K562 (cell line): ENCODE measurements at regions of chr13 and their contacts with region 1.

Region 1: DNA sequence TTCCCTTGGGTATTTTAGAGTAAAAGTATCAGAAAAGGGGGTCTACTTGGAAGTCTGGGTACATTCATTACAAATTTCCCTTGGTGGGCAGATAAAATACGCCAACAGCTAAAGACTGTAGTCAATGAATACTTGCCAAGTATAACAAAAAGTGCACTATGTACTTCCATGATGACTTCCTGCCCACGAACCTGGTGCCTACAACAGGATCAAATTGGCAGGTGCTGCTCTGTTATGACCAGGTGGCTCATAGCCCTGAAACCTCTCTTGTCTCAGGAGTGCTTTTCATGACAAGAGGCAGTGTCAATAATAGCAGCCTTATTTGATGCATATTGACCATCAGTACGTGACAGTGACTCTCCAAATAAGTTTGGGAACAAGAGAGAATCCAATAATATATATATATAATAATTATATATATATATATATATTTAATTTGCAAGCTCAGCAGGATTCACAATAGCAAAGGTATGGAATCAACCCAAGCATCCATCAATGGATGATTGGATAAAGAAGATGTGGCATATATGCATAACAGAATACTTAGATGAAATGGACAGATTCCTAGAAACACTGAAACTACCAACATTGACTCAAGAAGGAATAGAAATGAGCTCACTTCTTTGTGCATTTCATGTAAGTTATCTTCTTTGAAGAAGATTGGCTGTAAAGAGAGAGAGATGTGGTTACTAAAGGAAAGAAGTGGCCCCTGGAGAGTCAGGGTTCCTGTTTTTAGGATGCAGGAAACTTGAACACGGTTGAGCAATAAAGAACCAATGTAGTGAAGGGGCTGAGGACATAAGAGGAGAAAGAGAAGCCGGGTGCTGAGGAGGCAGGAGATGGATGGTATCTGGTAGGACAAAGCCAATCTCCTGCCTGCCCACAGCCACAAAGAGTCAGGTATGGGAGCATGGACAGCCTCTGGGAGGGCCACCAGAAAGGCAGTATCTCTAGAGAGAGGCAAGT is 52.0 kb upstream of the GTF2F2 start:
- DNase-seq: no peak
- ATAC-seq: no peak
- H3K4me3 ChIP-seq: no peak overlapping the region
- H3K27ac ChIP-seq: no peak overlapping the region
- H3K4me1 ChIP-seq: no peaks in the 10 kb centered on the region; a peak in 1 of 5 replicates
- H3K27me3 ChIP-seq: peaks cover 0 to 3% of the 10 kb centered on the region in 2 experiments; a peak in 2 of 5 replicates
- CTCF ChIP-seq: no peak
- EP300 ChIP-seq: no peak
- POLR2A ChIP-seq: no peak
- RAD21 ChIP-seq: no peak

Region 2: DNA sequence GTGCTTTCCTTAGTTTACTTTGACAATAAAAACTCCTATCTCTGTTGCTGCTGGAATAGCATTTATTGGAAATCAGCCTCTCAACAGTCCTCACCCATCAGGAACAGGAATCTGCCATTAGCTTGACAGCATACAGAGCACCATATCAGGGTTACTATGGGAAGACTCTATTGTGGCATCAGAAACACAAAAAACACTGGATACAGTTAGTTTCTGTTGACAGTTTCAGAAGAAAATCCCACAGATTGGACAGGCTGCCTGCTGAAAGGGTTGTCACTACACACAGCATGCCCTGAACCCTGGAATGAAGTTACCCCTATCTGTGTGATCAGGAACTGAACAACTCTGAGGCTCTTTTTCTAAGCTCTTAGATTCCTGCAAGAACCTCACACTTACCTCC is 1454.3 kb before region 1 on chr13:
- CTCF ChIA-PET with region 1: no interaction called
- POLR2A ChIA-PET with region 1: no interaction called
- in situ Hi-C with region 1: no loop called
- intact Hi-C with region 1: no loop called
- DNase-seq: no peak
- ATAC-seq: no peak
- H3K4me3 ChIP-seq: no peak overlapping the region
- H3K27ac ChIP-seq: no peak overlapping the region
- H3K4me1 ChIP-seq: no peaks in the 10 kb centered on the region
- H3K27me3 ChIP-seq: no peaks in the 10 kb centered on the region
- CTCF ChIP-seq: no peak
- EP300 ChIP-seq: no peak
- POLR2A ChIP-seq: no peak
- RAD21 ChIP-seq: no peak

Region 3: DNA sequence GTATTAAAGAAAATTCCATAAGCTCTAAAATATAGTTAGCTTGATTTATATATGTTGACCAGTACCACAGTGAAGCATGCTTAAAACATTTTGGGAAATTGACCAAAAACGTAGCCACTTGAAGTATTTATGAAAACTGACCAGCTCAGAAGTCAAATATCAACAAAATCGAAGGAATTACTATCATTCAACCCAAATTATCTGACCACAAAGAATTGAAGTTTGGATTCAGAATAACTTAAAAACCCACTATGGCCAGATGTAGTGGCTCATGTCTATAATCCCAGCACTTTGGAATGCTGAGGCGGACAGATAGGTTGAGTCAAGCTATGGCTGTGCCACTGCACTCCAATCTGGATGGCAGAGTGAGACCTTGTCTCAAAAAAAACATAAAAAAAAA is 47.1 kb before region 1 on chr13:
- CTCF ChIA-PET with region 1: no interaction called
- POLR2A ChIA-PET with region 1: no interaction called
- in situ Hi-C with region 1: no loop called
- intact Hi-C with region 1: no loop called
- DNase-seq: no peak
- ATAC-seq: no peak
- H3K4me3 ChIP-seq: no peak overlapping the region
- H3K27ac ChIP-seq: no peak overlapping the region
- H3K4me1 ChIP-seq: no peaks in the 10 kb centered on the region
- H3K27me3 ChIP-seq: no peaks in the 10 kb centered on the region
- CTCF ChIP-seq: no peak
- EP300 ChIP-seq: no peak
- POLR2A ChIP-seq: no peak
- RAD21 ChIP-seq: no peak

Region 4: DNA sequence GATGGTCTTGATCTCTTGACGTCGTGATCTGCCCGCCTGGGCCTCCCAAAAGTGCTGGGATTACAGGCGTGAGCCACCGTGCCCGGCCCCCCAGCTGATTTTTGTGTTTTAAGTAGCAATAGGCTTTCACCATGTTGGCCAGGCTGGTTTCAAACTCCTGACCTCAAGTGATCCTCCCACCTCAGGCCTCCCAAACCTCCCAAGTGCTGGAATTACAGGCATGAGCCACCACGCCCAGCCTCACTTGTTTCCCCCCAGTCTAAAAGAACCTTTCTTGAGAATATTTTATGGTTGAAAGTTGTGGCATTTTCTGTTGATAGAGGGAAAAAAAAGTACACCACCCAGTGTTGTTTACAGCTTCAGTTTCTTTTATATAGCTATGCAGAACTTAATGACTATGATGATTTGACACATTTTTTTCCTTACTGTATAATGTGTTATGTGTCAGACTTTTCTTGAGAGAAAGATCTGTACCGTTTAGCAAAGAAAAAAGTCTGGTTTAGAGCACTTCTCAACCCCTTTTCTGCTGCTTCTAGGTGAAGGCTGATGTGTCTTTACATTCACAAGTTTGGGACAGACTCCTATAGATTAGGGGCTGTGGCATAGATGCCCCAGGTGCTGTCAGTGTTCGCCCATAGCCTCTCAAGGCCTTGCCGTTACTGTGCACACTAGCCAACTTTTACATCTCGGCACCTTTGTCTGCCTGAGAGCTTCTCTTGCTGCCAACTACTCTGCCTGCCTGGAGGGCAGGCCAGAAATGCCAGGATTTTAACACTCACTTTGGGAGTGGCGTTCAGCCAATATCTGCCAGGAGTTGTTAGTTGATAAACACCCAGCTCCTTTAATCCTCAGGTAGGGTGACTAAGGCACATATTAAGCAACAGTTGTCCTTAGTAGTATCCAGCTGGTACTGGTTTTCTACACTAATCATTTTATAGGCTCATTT is 99.6 kb after region 1 on chr13:
- CTCF ChIA-PET with region 1: no interaction called
- POLR2A ChIA-PET with region 1: no interaction called
- in situ Hi-C with region 1: no loop called
- intact Hi-C with region 1: loop called (anchors 5 kb)
- DNase-seq: peak in 2 of 4 experiments; percentile 3 to 7
- ATAC-seq: no peak
- H3K4me3 ChIP-seq: no peak overlapping the region
- H3K27ac ChIP-seq: no peak overlapping the region
- H3K4me1 ChIP-seq: no peaks in the 10 kb centered on the region
- H3K27me3 ChIP-seq: no peaks in the 10 kb centered on the region
- CTCF ChIP-seq: no peak
- EP300 ChIP-seq: no peak
- POLR2A ChIP-seq: no peak
- RAD21 ChIP-seq: no peak